ENCODE measurements at regions of chr6 and their contacts with region 1.

Region 1: DNA sequence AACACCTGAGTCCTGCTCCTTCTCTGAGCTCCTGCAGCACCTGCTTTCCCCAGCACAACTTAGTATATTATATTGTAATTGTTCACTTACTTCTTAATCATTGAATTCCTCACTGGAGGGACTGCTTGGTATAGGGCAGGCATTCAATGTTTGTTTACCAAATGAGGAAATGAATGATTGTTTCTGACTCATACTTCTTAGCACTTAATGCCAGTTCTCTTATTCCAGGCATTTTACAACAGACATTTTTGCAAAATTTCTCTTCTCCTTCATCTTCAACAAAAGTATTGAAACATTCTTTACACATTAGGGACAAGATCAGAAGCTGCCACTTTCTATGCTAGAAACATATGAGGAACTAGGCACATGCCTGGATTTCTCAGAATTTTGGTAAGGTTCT is 119.4 kb downstream of the TBX18 start:
- DNase-seq: no peak

Region 2: GRCh38 chr6:84568971-84569370 is 76.0 kb before region 1 on chr6:
- intact Hi-C with region 1: loop called in 1 of 2 experiments (anchors 2 kb)
- DNase-seq: no peak

Measured in posterior vena cava (tissue), 2 donors.